Endothelial cell of umbilical vein (primary cell): ENCODE measurements at regions of chr14 and their contacts with region 1.

Region 1: GRCh38 chr14:95157327-95158189 is at the start of gene DICER1:
- DNase-seq: peak; percentile 94
- H3K4me3 ChIP-seq: peak within 1 kb of the TSS; percentile 60 to 92 (median 90)
- H3K27ac ChIP-seq: peak within 1 kb of the TSS; percentile 65
- H3K4me1 ChIP-seq: peaks cover 18% of the 10 kb centered on the region
- H3K27me3 ChIP-seq: no peaks in the 10 kb centered on the region
- CTCF ChIP-seq: no peak
- POLR2A ChIP-seq: peak; percentile 71
- total RNA-seq, gene DICER1: 41.1 and 43.6 TPM in 2 replicates

Region 2: GRCh38 chr14:95134304-95134933 is 23.1 kb before region 1 on chr14:
- CTCF ChIA-PET with region 1: no interaction called
- POLR2A ChIA-PET with region 1: no interaction called
- dilution Hi-C with region 1: no loop called
- intact Hi-C with region 1: no loop called
- DNase-seq: peak; percentile 9
- H3K4me3 ChIP-seq: no peak overlapping the region
- H3K27ac ChIP-seq: no peak overlapping the region
- H3K4me1 ChIP-seq: no peaks in the 10 kb centered on the region
- H3K27me3 ChIP-seq: no peaks in the 10 kb centered on the region
- CTCF ChIP-seq: no peak
- POLR2A ChIP-seq: no peak

Region 3: DNA sequence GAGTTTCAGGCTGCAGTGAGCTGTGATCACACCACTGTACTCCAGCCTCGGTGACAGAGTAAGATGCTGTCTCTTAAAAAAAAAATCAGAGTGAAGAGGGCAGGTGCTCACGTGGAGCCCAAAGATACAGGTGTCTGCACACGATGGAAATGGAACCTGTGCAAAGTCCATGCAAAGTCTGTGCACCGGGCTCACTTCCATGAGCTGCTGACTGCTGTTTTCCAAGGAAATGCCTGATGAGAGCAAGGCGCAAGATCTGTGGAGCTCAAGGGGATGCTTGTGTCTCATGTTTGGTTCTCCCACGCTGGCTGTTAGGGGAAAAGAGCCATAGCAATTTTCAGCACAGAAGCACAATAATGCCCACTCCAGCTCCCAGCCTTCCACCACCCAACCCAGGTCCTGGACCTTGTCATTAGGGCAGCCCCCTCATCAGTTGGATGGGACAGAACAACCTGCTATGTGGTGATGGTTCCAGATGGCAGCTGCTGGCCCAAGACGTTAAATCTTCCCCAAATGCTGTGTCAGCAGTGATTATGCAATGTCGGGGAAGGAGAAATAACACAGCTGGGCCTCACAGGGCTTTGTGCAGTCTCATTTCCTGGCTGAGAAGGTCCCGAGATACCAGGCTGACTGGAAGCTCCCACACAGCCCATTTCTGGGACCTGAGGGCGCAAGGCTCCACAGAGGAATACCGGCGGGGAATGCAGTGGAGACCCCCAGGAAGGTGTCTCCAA is 27.6 kb after region 1 on chr14:
- CTCF ChIA-PET with region 1: interaction called, 5 read pairs
- POLR2A ChIA-PET with region 1: no interaction called
- dilution Hi-C with region 1: no loop called
- intact Hi-C with region 1: loop called (anchors 1 kb)
- DNase-seq: peak; percentile 63
- H3K4me3 ChIP-seq: no peak overlapping the region
- H3K27ac ChIP-seq: peak overlapping the region; percentile 27
- H3K4me1 ChIP-seq: peaks cover 38% of the 10 kb centered on the region
- H3K27me3 ChIP-seq: no peaks in the 10 kb centered on the region
- CTCF ChIP-seq: no peak
- POLR2A ChIP-seq: no peak

Region 4: DNA sequence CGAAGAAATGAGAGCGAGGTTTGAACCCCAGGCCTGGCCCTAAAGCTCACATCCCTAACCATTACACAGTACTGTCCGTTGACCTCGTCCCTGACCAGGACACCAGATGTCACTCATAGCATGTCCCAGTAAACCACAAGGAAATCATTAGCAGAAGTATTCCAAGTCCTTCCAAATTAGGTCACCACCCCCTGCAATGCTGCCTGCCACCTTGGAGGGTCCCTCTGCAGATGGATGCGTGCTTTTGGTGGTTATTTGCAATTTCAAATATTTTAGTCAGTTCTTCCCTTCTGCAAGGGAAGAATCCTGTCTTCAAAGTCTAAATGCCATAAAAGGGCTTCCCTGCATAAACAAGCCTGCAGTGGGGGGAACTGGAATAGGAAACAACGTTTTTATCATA is 90.9 kb after region 1 on chr14:
- CTCF ChIA-PET with region 1: no interaction called
- POLR2A ChIA-PET with region 1: no interaction called
- dilution Hi-C with region 1: no loop called
- intact Hi-C with region 1: loop called (anchors 2 kb)
- DNase-seq: no peak
- H3K4me3 ChIP-seq: peak overlapping the region in 1 of 3 experiments; percentile 0
- H3K27ac ChIP-seq: peak overlapping the region; percentile 55
- H3K4me1 ChIP-seq: peaks cover 46% of the 10 kb centered on the region
- H3K27me3 ChIP-seq: no peaks in the 10 kb centered on the region
- CTCF ChIP-seq: no peak
- POLR2A ChIP-seq: no peak

Region 5: DNA sequence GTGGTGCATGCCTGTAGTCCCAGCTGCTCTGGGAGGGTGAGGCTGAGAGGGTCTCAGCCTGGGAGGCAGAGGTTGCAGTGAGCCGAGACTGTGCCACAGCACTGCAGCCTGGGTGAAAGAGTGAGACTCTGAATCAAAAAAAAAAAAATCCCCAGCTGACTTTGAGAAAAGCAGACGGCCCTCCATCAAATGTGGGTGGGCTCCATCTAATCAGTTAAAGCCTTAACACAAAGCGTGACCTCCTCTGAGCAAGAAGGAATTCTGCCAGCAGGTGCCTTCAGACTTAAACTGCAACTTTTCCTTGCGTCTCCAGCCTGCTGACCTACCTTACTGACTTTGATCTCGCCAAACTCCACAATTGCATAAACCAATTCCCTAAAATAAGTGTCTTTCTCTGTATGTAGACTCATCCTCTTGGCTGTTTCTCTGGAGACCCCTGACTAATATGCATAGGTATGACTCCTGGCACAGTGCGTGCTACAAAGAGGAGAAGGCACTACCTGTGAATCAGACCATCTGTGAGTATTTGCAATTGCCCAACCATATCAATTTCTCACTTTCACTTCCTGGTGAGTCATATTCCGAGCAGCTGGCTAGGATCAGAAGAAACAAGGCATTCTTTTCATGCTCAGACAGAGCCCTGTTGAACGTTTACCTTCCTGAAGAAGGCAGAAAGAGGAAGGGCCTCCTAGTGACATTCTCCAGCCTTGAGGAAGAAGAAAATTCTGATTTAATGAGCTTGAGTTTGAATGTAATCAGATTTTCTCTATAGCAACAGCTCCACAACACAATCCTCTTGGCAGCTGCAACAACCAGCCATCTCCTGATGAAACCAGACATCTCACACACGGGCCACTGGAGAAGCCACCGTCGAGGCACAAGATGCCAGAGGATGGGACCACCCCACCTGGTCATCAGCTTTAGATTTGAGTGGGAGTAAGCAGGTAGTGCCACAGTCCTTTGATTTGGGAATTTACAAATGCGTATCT is 107.8 kb after region 1 on chr14:
- CTCF ChIA-PET with region 1: interaction called, 3 read pairs
- POLR2A ChIA-PET with region 1: no interaction called
- dilution Hi-C with region 1: no loop called
- intact Hi-C with region 1: loop called (anchors 1 kb)
- DNase-seq: peak; percentile 96
- H3K4me3 ChIP-seq: peak overlapping the region in 1 of 3 experiments; percentile 37
- H3K27ac ChIP-seq: peak overlapping the region; percentile 98
- H3K4me1 ChIP-seq: peaks cover 23% of the 10 kb centered on the region
- H3K27me3 ChIP-seq: no peaks in the 10 kb centered on the region
- CTCF ChIP-seq: no peak
- POLR2A ChIP-seq: no peak

Region 6: GRCh38 chr14:95319312-95320021 is 161.9 kb after region 1 on chr14 and contains the start of gene CLMN:
- CTCF ChIA-PET with region 1: interaction called, 4 read pairs
- POLR2A ChIA-PET with region 1: no interaction called
- dilution Hi-C with region 1: no loop called
- intact Hi-C with region 1: loop called (anchors 2 kb)
- DNase-seq: peak; percentile 25
- H3K4me3 ChIP-seq: peak within 1 kb of the TSS; percentile 45 to 75 (median 50)
- H3K27ac ChIP-seq: no peak within 1 kb of the TSS
- H3K4me1 ChIP-seq: peaks cover 3% of the 10 kb centered on the region
- H3K27me3 ChIP-seq: peaks cover 2% of the 10 kb centered on the region in 2 experiments
- CTCF ChIP-seq: no peak
- POLR2A ChIP-seq: no peak
- total RNA-seq, gene CLMN: 8.4 and 9.6 TPM in 2 replicates

Region 7: GRCh38 chr14:95431199-95432143 is 273.9 kb after region 1 on chr14:
- CTCF ChIA-PET with region 1: no interaction called
- POLR2A ChIA-PET with region 1: no interaction called
- dilution Hi-C with region 1: no loop called
- intact Hi-C with region 1: loop called (anchors 5 kb)
- DNase-seq: peak; percentile 27
- H3K4me3 ChIP-seq: no peak overlapping the region
- H3K27ac ChIP-seq: no peak overlapping the region
- H3K4me1 ChIP-seq: no peaks in the 10 kb centered on the region
- H3K27me3 ChIP-seq: no peaks in the 10 kb centered on the region
- CTCF ChIP-seq: peak; percentile 40 to 50
- POLR2A ChIP-seq: no peak

Region 8: DNA sequence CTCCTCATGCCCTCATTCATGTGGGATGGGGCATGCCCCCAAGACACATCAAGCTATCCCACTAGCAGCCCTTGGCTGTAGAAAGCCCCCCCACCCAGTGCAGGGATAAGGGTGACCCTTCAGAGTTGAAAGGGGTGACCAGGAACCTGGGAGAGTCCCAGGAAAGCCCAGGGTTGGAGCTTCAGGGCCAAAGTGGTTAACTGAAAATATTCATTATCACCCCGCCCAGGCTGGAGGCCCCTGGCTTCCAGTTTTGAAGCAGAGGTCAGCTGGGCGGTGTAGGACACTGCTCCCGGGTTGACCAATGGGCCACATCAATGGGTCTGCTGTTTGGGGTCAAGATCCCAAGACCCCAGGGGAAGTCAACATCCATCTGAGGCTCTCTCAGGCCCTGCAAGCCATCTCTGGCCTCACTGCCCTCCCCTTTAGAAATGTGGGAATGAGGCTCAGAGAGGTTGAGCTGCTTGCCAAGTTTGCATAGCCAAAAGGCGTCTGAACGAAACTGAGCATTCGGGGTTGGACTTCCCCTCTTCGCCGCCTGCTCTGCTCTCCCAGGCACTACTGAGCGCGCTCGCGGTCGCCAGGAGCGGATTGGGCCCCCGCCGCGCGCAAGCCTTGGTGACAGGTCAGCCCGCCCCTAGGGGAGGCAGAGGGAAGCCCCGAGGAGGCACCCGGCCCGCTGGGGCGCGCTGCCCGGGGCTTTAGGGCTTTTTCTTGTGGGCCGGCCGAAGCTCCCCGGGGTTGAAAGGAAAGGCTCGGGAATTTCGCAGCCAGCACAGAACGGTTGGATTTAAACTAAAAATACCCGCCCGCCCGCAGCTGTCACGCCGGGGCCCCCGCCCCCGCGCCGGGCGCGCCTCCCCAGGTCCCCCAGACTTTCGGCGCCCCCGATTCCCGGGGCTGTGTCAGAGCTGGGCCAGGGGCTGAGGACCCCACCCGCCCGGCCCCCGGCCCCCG is 358.3 kb after region 1 on chr14:
- CTCF ChIA-PET with region 1: no interaction called
- POLR2A ChIA-PET with region 1: no interaction called
- dilution Hi-C with region 1: no loop called
- intact Hi-C with region 1: loop called (anchors 10 kb)
- DNase-seq: peak; percentile 49
- H3K4me3 ChIP-seq: peak overlapping the region; percentile 51 to 58 (median 52)
- H3K27ac ChIP-seq: no peak overlapping the region
- H3K4me1 ChIP-seq: peaks cover 55% of the 10 kb centered on the region
- H3K27me3 ChIP-seq: no peaks in the 10 kb centered on the region
- CTCF ChIP-seq: peak; percentile 24 to 57
- POLR2A ChIP-seq: no peak

Region 9: DNA sequence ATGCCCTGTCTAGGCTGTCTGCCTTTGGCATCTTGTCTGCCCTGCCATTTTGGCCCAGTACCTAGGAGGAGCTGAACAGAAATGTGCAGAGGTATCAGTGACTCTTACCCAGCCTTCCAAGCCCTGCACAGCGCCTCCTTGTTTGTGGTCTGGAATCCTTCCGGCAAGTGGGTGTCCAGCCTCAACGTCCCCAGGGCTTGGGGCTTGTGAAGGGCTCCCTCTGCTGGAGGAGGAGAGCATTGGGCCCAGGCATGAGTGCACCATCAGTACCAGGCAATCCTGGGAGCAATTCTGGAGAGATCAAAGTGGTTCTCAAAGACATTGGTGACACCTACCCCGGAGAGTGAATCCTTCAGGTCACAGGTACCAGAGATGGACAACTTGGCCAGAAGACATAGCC is 526.2 kb after region 1 on chr14:
- CTCF ChIA-PET with region 1: no interaction called
- POLR2A ChIA-PET with region 1: no interaction called
- dilution Hi-C with region 1: no loop called
- intact Hi-C with region 1: no loop called
- DNase-seq: no peak
- H3K4me3 ChIP-seq: no peak overlapping the region
- H3K27ac ChIP-seq: no peak overlapping the region
- H3K4me1 ChIP-seq: no peaks in the 10 kb centered on the region
- H3K27me3 ChIP-seq: no peaks in the 10 kb centered on the region
- CTCF ChIP-seq: peak; percentile 37 to 42
- POLR2A ChIP-seq: no peak